ENCODE measurements at regions of chr10 and their contacts with region 1.

Region 1: DNA sequence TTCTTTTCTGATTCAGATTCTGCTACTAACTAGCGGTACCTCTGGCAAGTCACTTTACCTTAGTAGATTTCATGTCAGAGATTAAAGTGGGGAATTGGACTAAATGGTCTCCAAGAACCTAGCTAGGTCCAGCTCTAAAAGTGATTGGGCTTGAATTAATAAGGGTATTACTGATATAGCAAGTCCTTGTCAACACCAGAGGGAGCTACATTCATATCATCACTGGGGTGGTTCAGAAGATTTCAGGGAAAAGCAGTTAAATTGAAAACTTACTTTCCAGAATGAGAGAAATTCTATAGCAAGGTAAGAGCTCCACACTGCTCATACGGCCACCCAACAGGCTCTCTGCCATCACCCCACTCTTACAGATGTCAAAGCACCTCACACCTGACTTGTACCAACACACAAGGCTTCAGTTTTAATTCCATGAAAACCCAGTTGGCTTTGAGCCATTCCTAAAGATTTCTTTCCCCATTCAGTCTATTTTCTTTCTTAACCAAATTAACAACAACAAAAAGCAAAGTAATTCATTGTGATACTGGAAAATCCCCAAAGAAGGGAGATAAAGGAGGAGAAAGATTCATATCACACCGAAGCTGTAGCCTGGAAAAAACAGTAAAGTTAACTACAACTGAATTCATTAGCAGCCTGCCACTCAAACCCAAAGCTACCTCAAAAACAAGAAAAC is 38.0 kb upstream of the SPOCK2 start:
- DNase-seq: peak; percentile 62
- H3K4me3 ChIP-seq: no peak overlapping the region
- H3K27ac ChIP-seq: no peak overlapping the region
- H3K4me1 ChIP-seq: no peaks in the 10 kb centered on the region
- CTCF ChIP-seq: peak; percentile 78

Region 2: DNA sequence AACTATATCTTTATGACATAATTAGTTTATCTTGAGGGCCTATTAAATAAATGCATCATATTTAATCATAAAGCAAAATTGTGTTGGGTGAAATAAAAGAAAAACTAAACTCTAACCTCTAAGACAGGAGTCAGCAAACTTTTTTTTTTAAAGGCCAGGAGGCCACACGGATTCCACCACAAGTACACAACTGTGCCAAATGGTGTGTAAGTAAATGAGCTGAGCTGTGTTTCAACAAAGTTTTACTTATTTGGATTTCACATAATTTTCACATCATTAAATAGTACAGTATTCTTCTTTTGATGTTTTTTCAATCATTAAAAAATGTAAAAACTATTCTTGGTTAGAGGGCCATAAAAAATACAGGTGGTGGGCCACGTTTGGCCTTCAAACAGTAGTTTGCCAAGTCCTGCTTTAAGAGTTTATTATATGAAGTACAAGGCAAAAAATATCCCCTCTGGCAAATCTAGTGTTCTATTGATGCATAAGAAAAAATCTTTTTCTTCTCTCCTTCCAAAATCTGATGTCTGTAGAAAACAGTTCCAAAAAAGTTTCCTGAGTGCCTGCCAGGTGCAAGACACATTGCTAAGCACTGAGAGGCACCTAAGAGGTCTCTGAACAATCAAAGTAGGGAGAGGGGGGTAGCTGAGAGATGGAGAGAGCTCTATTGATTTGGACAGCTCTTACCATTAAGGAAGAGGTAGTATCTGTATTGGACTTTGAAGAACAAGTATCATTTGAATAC is 11.4 kb before region 1 on chr10:
- CTCF ChIA-PET with region 1: no interaction called
- POLR2A ChIA-PET with region 1: interaction called, 14 read pairs
- intact Hi-C with region 1: no loop called
- DNase-seq: no peak
- H3K4me3 ChIP-seq: no peak overlapping the region
- H3K27ac ChIP-seq: no peak overlapping the region
- H3K4me1 ChIP-seq: no peaks in the 10 kb centered on the region
- CTCF ChIP-seq: no peak

Region 3: DNA sequence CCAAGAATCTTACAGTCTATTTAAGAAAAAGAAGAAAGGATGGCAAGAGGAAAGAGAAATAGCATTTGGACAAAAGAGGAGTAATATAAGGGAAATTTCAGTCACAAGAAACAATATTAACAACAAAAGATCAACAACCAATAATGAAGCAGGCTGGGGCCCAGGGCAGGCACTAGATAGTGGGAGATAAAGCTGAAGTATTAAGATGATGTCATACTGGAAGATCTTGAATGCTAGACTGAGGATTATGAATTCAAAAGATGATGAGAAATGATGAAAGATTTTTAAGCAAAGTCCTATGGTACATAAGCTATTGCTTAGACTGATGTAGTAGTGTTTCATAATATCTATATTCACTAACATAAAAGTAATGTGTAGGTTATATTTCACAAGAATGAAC is 13.8 kb after region 1 on chr10:
- CTCF ChIA-PET with region 1: no interaction called
- POLR2A ChIA-PET with region 1: interaction called, 11 read pairs
- intact Hi-C with region 1: no loop called
- DNase-seq: no peak
- H3K4me3 ChIP-seq: no peak overlapping the region
- H3K27ac ChIP-seq: no peak overlapping the region
- H3K4me1 ChIP-seq: peaks cover 6% of the 10 kb centered on the region
- CTCF ChIP-seq: no peak

Region 4: DNA sequence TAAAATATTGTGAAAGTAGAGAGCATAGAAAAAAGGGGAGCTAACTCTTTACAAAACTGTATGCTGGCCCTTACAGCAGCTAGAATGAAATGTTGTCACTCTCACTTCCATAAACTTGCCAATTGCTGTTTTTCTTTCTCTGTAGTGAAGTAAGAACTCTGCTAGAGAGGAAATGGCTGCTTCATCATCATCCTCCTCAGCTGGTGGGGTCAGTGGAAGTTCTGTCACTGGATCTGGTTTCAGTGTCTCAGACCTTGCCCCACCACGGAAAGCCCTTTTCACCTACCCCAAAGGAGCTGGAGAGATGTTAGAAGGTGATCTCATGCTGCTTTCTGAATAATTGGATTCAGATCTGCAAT is 97.4 kb after region 1 on chr10:
- CTCF ChIA-PET with region 1: interaction called, 3 read pairs
- POLR2A ChIA-PET with region 1: interaction called, 3 read pairs
- intact Hi-C with region 1: loop called (anchors 1 kb)
- DNase-seq: no peak
- H3K4me3 ChIP-seq: no peak overlapping the region
- H3K27ac ChIP-seq: no peak overlapping the region
- H3K4me1 ChIP-seq: peaks cover 43% of the 10 kb centered on the region
- CTCF ChIP-seq: no peak

Measured in OCI-LY7 (cell line).